ENCODE measurements at regions of chr11 and their contacts with region 1.

Region 1: GRCh38 chr11:122101625-122102291 is 14.3 kb downstream of the BLID start:
- DNase-seq: peak; percentile 51
- H3K4me3 ChIP-seq: peak overlapping the region; percentile 24 to 32
- H3K27ac ChIP-seq: peak overlapping the region; percentile 76 to 77
- H3K4me1 ChIP-seq: no peaks in the 10 kb centered on the region
- H3K27me3 ChIP-seq: peaks cover 3% of the 10 kb centered on the region
- CTCF ChIP-seq: peak in 3 of 4 experiments; percentile 41 to 59 (median 53)
- POLR2A ChIP-seq: no peak

Region 2: DNA sequence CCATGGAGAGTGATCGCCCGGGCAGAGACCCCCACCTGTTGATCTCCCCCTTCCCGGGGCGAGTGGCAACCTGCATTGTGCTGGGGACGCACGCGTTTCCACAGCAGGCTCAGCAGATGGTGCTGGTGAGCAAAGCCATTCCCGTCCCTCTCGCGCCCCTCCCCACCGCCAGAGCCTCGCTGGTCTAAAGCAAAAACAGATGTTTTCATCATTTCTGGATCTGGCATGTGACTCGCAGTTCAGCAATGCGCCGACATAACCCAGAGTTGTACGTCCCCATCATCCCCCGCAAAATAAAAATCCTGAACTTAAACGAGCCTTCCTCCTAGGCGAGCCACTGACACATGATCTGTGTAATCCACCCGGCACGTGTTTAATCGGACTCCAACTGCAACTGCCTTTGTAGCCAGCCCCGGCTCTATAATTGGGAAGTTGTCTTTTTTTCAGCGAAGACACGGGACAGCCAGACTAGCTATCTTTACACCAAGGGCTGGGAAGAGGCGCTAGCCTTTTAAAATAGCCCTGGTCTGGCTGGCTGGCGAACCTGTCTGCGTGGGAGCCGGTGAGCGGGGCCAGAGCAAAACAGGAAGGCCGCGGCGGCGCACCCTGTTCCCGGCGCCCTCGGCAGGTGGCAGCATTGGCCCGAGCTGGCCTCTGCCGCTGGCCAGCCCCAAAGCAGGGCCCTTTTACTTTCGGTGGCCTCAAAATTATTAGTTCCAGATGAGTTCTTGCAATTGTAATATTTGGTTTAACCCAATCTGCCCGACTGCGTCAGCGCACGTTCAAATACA is 446.0 kb before region 1 on chr11:
- intact Hi-C with region 1: loop called (anchors 1 kb)
- DNase-seq: peak; percentile 81
- H3K4me3 ChIP-seq: peak overlapping the region; percentile 26 to 31
- H3K27ac ChIP-seq: peak overlapping the region; percentile 80 to 84
- H3K4me1 ChIP-seq: no peaks in the 10 kb centered on the region
- H3K27me3 ChIP-seq: no peaks in the 10 kb centered on the region
- CTCF ChIP-seq: peak; percentile 74 to 95 (median 83)
- POLR2A ChIP-seq: no peak

Region 3: DNA sequence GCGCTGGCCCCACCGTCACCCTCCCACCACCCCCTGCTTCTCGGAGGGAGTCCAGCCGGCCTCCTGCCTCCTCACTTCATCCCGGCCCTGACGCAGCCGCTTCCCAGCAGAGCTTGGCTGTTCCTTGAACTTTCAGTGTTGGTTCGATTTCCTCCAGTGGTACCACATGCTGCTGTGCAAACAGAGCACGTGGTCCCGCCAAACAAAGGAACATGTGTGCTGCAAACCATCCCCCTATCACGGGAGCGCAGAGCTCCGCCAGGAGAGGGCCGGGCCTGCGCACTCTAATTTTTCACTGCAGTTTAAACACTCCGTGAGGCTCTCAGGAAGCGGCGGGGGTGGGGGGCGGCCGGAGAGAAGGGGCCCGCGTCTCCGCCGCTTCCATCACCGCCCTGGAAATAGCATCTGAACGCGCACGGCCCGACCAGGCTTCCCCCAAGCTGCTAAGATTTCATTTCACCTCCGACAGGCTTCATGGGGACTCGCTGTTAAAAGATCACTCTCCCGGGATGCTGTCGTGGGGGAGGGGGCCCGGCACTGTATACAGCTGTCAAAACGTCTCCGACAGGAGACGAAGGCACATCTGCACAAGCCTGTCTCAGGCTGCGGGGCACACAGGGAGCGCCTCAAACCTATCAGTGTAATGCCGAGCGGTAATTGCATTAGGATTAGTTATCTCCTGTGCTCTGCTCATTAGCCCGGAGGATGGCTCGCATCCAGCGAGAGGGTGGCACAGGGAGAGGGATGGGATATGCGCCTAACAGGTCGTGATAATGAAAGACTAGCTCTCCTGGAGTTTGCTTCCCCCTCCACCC is 379.1 kb before region 1 on chr11:
- intact Hi-C with region 1: loop called (anchors 2 kb)
- DNase-seq: peak; percentile 42
- H3K4me3 ChIP-seq: peak overlapping the region; percentile 24
- H3K27ac ChIP-seq: peak overlapping the region; percentile 61 to 68
- H3K4me1 ChIP-seq: no peaks in the 10 kb centered on the region
- H3K27me3 ChIP-seq: no peaks in the 10 kb centered on the region
- CTCF ChIP-seq: peak in 1 of 4 experiments; percentile 27
- POLR2A ChIP-seq: no peak

Region 4: GRCh38 chr11:122020902-122021301 is 80.9 kb before region 1 on chr11:
- intact Hi-C with region 1: loop called (anchors 5 kb)
- DNase-seq: no peak
- H3K4me3 ChIP-seq: no peak overlapping the region
- H3K27ac ChIP-seq: no peak overlapping the region
- H3K4me1 ChIP-seq: no peaks in the 10 kb centered on the region
- H3K27me3 ChIP-seq: no peaks in the 10 kb centered on the region
- CTCF ChIP-seq: peak in 2 of 4 experiments; percentile 10 to 23
- POLR2A ChIP-seq: no peak

Region 5: GRCh38 chr11:122202951-122203456 is 101.2 kb after region 1 on chr11:
- intact Hi-C with region 1: loop called (anchors 2 kb)
- DNase-seq: peak; percentile 39
- H3K4me3 ChIP-seq: peak overlapping the region; percentile 14 to 15
- H3K27ac ChIP-seq: peak overlapping the region; percentile 40 to 41
- H3K4me1 ChIP-seq: no peaks in the 10 kb centered on the region
- H3K27me3 ChIP-seq: no peaks in the 10 kb centered on the region
- CTCF ChIP-seq: peak; percentile 90 to 95 (median 94)
- POLR2A ChIP-seq: no peak

Measured in prostate gland (tissue), 2 donors.